ENCODE measurements at regions of chr1 and their contacts with region 1.

Region 1: GRCh38 chr1:160539990-160540858 is 17.2 kb upstream of the SLAMF6 start:
- DNase-seq: peak; percentile 66
- H3K4me3 Mint-ChIP-seq: peak overlapping the region; percentile 56
- H3K27ac Mint-ChIP-seq: peak overlapping the region; percentile 83
- H3K4me1 Mint-ChIP-seq: peaks cover 48% of the 10 kb centered on the region
- H3K27me3 Mint-ChIP-seq: no peaks in the 10 kb centered on the region

Region 2: GRCh38 chr1:159790237-159790917 is 749.8 kb before region 1 on chr1:
- intact Hi-C with region 1: no loop called
- DNase-seq: no peak
- H3K4me3 Mint-ChIP-seq: no peak overlapping the region
- H3K27ac Mint-ChIP-seq: no peak overlapping the region
- H3K4me1 Mint-ChIP-seq: no peaks in the 10 kb centered on the region
- H3K27me3 Mint-ChIP-seq: peaks cover 13% of the 10 kb centered on the region

Region 3: GRCh38 chr1:160428655-160429054 is 111.6 kb before region 1 on chr1:
- intact Hi-C with region 1: loop called (anchors 1 kb)
- DNase-seq: no peak
- H3K4me3 Mint-ChIP-seq: no peak overlapping the region
- H3K27ac Mint-ChIP-seq: peak overlapping the region; percentile 73
- H3K4me1 Mint-ChIP-seq: peaks cover 46% of the 10 kb centered on the region
- H3K27me3 Mint-ChIP-seq: no peaks in the 10 kb centered on the region

Region 4: GRCh38 chr1:160558660-160559380 is 18.6 kb after region 1 on chr1:
- intact Hi-C with region 1: loop called (anchors 2 kb)
- DNase-seq: no peak
- H3K4me3 Mint-ChIP-seq: peak overlapping the region; percentile 73
- H3K27ac Mint-ChIP-seq: peak overlapping the region; percentile 80
- H3K4me1 Mint-ChIP-seq: peaks cover 46% of the 10 kb centered on the region
- H3K27me3 Mint-ChIP-seq: no peaks in the 10 kb centered on the region

Region 5: GRCh38 chr1:160567858-160568682 is 27.8 kb after region 1 on chr1:
- intact Hi-C with region 1: loop called (anchors 2 kb)
- DNase-seq: peak; percentile 59
- H3K4me3 Mint-ChIP-seq: peak overlapping the region; percentile 76
- H3K27ac Mint-ChIP-seq: peak overlapping the region; percentile 98
- H3K4me1 Mint-ChIP-seq: peaks cover 72% of the 10 kb centered on the region
- H3K27me3 Mint-ChIP-seq: no peaks in the 10 kb centered on the region

Measured in activated T-helper 2 cell treated with anti-CD3 and anti-CD28 coated beads, Interferon-gamma antibody, Interleukin-2, Interleukin-4, amounts not matched to agents 10 μg/mL and 5 μg/mL and 100 μg/mL, durations not matched to agents 14 hours and 24 hours and 36 hours (primary cell).